ENCODE measurements at regions of chr14 and their contacts with region 1.

Region 1: DNA sequence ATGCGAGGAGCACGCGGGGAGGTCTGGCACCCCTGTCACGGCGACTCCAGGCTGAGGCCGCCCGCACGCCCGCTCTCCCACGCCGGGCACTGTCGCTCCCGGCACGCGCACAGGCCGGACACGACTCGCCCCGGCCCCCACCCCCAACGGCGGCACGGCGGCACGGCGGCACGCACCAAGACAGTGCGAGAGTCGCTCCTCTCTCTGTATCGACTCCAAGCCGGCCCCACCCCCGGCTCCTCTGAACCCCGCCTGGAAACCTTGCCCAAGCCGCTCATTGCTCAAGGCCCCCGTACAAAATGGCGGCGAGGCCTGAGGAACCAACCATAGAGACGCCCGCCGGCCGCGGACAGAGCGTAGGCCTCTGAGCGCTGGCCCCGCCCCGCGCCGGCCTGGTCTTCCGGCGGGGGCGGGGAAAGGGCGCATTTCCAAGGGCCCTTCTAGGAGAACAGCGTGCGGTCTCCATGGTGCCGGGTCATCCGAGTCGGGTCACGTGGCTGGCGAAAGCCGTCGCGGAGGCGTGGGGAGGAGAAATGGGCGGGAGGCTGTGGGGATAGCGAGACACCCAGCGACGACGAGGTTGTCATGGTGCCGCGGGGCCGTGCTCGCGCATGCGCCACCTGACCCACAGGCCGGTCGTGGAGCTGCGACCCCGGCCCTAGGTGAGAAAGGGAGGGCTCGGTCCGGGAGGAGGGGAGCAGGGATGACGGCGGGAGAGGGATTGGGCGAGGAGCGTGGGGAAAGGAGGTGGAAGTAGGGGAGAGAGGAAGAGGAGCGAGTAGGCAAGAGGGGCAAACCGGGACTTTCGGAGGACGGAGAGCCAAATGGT is at the start of gene CIPC:
- DNase-seq: peak; percentile 100
- H3K4me3 Mint-ChIP-seq: peak within 1 kb of the TSS; percentile 88
- H3K27ac Mint-ChIP-seq: peak within 1 kb of the TSS; percentile 96
- H3K4me1 Mint-ChIP-seq: peaks cover 38% of the 10 kb centered on the region
- H3K27me3 Mint-ChIP-seq: no peaks in the 10 kb centered on the region
- total RNA-seq, gene CIPC: 5.6 to 6.1 TPM

Region 2: DNA sequence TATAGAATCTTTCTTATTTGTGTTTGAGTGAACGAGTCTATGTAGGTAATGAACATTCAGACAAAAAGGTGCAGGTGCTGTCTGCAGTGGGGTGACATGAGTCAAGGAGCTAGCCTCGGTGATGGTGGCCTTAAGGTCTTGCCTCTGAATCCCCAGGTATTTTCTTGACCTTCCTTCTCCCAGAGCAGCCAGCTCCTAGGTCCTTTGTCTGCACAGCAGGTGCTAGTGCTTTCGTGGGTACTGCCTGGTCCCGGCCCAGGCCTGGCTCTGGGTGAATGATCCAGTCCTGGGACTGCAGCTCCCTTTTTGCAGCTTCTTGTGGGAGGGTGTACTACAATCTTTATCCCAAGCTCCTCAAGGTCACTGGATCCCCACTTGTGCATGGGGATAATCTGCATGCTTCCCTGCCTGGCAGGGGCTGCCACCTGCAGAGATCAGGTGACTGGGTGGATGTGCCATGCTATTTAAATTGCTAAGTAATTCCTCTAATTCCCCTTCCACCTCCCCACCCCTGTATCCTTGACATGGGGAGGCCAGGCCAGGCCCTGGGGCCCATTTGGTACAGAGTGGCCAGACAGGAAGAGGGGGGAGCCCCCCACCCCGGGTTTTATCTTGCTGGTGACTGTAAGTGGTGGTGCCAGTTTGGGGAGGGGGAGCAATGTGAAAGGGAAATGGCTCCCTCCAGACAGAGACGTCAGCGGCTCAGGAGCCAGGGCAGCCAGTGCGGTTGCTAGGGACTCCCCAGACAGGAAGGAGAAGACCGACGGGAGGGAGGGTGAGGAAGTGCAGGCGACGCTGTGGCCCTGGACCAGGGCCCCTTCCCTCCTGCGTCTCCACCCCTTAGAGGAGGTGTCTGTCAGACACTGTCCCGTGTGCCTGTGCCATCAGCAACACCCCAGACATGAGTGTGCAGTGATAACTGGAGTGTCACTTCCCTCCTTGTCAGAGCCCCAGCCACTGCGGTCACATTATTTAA is 329.9 kb before region 1 on chr14:
- CTCF ChIA-PET with region 1: interaction called, 3 read pairs
- intact Hi-C with region 1: loop called (anchors 1 kb)
- DNase-seq: peak; percentile 91
- H3K4me3 Mint-ChIP-seq: peak overlapping the region; percentile 1
- H3K27ac Mint-ChIP-seq: peak overlapping the region; percentile 6
- H3K4me1 Mint-ChIP-seq: peaks cover 14% of the 10 kb centered on the region
- H3K27me3 Mint-ChIP-seq: peaks cover 21% of the 10 kb centered on the region

Region 3: DNA sequence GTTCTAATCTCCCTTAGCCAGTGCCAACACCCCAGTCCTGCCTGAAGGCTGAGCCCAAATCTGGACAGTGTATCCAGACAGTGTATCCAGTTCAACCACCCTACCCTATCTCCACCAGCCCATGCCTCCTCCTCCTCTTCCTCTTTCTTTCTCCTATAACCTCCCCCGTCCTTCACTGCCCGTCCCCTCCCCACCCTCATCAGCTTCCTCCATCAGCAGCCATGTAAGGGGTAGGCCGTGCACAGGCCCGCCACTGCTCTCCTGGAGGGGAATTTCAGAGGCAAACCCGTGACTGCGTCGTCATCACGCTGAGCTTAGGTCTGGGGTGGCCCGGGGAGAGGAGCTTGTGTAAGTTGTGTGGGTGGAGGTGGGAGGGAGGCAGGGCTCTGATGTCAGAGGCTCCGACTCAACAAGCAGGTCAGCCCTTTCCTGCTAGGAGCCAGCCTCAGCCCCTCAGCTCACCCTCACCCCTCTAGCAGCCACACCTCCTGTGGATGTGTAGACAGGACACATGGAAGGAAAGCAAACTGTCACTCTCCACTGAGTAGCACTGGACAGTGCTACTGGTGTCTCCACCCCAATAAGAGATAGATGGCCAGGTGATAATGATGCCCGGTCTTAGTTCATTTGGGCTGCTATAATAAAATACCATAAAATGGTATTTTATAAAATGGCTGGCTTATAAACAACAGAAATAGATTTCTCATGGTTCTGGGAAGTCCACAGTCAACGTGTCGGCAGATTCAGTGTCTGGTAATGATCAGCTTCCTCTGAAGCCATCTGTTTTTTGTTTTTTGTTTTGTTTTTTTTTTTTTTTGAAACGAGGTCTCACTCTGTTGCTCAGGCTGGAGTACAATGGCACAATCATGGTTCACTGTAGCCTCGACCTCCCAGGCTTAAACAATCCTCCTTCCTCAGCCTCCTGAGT is 119.9 kb before region 1 on chr14:
- CTCF ChIA-PET with region 1: no interaction called
- intact Hi-C with region 1: loop called (anchors 1 kb)
- DNase-seq: peak; percentile 97
- H3K4me3 Mint-ChIP-seq: peak overlapping the region; percentile 71
- H3K27ac Mint-ChIP-seq: peak overlapping the region; percentile 95
- H3K4me1 Mint-ChIP-seq: peaks cover 28% of the 10 kb centered on the region
- H3K27me3 Mint-ChIP-seq: no peaks in the 10 kb centered on the region

Region 4: GRCh38 chr14:77086017-77086736 is 11.7 kb before region 1 on chr14:
- CTCF ChIA-PET with region 1: interaction called, 20 read pairs
- intact Hi-C with region 1: no loop called
- DNase-seq: no peak
- H3K4me3 Mint-ChIP-seq: no peak overlapping the region
- H3K27ac Mint-ChIP-seq: no peak overlapping the region
- H3K4me1 Mint-ChIP-seq: peaks cover 4% of the 10 kb centered on the region
- H3K27me3 Mint-ChIP-seq: no peaks in the 10 kb centered on the region

Region 5: DNA sequence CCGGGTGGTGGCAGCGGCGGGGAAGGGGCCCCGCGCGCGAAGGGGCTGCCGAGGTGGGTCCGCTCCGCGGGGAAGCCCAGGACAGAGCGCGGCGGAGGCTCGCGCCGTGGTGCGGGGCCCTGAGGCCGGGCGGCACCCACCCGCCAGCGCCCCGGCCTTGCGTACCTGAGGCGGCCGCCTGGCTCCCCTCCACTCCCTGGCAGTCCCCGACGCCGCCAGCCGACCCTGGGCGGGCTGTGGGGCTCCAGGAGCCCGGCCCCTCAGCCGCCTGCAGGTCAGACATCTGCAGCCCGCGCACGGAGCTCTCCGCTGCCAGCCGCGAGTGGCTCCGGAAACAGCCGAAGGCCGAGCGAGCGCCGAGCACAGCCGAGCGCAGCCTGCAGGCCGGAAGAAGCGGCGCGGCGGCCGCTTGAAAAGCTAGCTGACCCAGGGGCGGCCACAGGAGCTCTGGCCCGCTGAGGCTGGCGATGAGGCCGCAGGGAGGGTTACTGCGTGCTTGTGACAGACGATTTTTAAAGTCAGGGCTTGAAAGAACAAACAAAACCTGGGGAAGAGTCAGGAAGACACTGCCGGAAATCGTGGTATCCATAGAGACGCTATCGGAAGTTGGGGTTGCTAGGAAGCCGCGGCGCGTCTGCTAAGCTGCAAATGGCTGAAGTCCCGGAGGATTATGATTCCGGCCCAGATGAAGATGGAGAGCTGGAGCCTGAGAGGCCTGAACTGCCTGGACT is 279.0 kb after region 1 on chr14 and contains the starts of genes SAMD15 and TMED8:
- CTCF ChIA-PET with region 1: no interaction called
- intact Hi-C with region 1: loop called (anchors 1 kb)
- DNase-seq: peak; percentile 84
- H3K4me3 Mint-ChIP-seq: peak within 1 kb of the TSS; percentile 90
- H3K27ac Mint-ChIP-seq: peak within 1 kb of the TSS; percentile 80
- H3K4me1 Mint-ChIP-seq: peaks cover 38% of the 10 kb centered on the region
- H3K27me3 Mint-ChIP-seq: no peaks in the 10 kb centered on the region
- total RNA-seq, gene SAMD15: 0.10 TPM in 1 of 2 experiments, not detected in the other
- total RNA-seq, gene TMED8: 21.5 to 21.7 TPM

Region 6: GRCh38 chr14:77799863-77800730 is 702.2 kb after region 1 on chr14 and contains the start of gene ADCK1:
- CTCF ChIA-PET with region 1: no interaction called
- intact Hi-C with region 1: loop called (anchors 1 kb)
- DNase-seq: peak; percentile 91
- H3K4me3 Mint-ChIP-seq: peak within 1 kb of the TSS; percentile 86
- H3K27ac Mint-ChIP-seq: peak within 1 kb of the TSS; percentile 84
- H3K4me1 Mint-ChIP-seq: peaks cover 12% of the 10 kb centered on the region
- H3K27me3 Mint-ChIP-seq: no peaks in the 10 kb centered on the region
- total RNA-seq, gene ADCK1: 4.2 to 5.1 TPM